ENCODE measurements at regions of chr20 and their contacts with region 1.

Region 1: DNA sequence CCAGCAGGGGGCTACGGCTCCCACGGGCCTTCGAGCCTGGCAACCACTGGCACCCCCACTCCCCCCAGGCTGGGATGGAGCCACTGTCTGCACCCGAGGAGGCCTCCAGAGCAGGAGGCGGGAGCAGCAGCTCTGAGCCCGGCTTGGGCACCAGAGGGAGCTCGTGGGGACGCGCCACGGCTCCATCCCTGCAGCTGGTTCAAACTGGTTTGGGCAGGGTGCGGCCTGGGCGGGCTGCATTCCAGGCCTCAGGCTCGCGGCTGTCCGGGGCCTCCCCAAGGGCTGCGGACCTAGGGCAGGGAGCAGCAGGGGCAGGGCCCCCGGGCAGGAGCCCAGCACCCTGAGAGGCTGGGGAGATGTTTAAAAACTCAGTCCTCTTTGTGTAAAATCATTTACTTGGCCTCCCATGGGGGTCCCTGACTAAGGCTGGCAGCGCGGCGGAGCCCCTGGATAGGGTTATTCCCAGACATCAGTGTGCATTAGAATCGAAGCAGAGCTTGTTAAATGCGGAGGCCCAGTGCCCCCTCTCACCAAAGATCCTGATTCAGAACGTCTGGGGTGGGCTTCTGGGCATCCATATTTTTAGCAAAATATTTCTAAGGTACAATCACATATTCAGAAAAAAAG is 4.1 kb upstream of the BCAS4 start:
- DNase-seq: peak; percentile 90
- H3K4me3 Mint-ChIP-seq: no peak overlapping the region
- H3K27ac Mint-ChIP-seq: peak overlapping the region; percentile 45
- H3K4me1 Mint-ChIP-seq: peaks cover 12% of the 10 kb centered on the region
- H3K27me3 Mint-ChIP-seq: no peaks in the 10 kb centered on the region

Region 2: GRCh38 chr20:50645253-50646118 is 145.3 kb before region 1 on chr20:
- CTCF ChIA-PET with region 1: no interaction called
- POLR2A ChIA-PET with region 1: no interaction called
- intact Hi-C with region 1: no loop called
- DNase-seq: no peak
- H3K4me3 Mint-ChIP-seq: no peak overlapping the region
- H3K27ac Mint-ChIP-seq: no peak overlapping the region
- H3K4me1 Mint-ChIP-seq: no peaks in the 10 kb centered on the region
- H3K27me3 Mint-ChIP-seq: no peaks in the 10 kb centered on the region

Region 3: GRCh38 chr20:50717974-50718761 is 72.6 kb before region 1 on chr20:
- CTCF ChIA-PET with region 1: no interaction called
- POLR2A ChIA-PET with region 1: no interaction called
- intact Hi-C with region 1: no loop called
- DNase-seq: no peak
- H3K4me3 Mint-ChIP-seq: no peak overlapping the region
- H3K27ac Mint-ChIP-seq: no peak overlapping the region
- H3K4me1 Mint-ChIP-seq: no peaks in the 10 kb centered on the region
- H3K27me3 Mint-ChIP-seq: peaks cover 3% of the 10 kb centered on the region

Region 4: DNA sequence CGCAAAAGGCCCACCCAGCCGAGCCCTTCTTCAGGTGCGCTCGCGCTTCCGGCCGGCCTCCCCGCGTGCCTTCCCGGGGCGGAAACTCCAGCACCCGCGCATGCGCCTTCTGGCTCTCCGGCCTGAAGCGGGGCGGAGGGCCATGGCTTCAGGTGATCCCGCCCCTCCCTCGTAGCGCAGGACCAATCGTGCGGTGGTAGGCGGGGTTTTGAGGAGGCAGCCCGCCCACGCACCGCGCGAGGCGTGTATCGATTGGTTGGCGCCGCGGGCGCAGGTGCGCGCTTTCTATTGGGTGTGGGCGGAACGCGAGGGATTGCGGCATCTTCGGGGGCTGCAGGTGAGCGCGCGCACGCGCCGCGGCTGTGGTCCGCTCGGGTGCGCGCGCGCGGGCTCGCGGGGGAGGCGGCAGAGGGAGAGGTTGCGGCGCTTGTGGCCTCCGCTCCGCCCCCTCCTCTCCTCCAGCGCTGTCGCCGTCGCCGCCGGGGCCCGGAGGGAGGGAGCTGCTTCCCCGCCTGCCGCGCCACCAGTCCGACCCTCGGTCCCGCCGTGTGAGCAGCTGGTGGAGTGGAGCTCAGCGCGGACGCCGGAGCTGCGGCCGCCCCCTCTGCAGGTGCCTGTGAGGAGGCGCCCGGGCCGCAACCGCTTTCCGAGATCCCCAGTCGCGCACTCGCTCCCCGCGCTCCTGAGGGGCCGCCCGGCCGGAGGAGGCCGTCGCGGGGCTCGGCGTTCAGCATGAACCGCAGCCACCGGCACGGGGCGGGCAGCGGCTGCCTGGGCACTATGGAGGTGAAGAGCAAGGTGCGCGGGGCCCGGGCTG is 59.5 kb before region 1 on chr20 and contains the start of gene PARD6B:
- CTCF ChIA-PET with region 1: interaction called, 5 read pairs
- POLR2A ChIA-PET with region 1: no interaction called
- intact Hi-C with region 1: loop called (anchors 2 kb)
- DNase-seq: peak; percentile 100
- H3K4me3 Mint-ChIP-seq: peak within 1 kb of the TSS; percentile 87
- H3K27ac Mint-ChIP-seq: peak within 1 kb of the TSS; percentile 65
- H3K4me1 Mint-ChIP-seq: peaks cover 59% of the 10 kb centered on the region
- H3K27me3 Mint-ChIP-seq: no peaks in the 10 kb centered on the region
- total RNA-seq, gene PARD6B: 6.3 to 8.2 TPM

Region 5: GRCh38 chr20:50776122-50776817 is 14.5 kb before region 1 on chr20:
- CTCF ChIA-PET with region 1: interaction called, 18 read pairs
- POLR2A ChIA-PET with region 1: no interaction called
- intact Hi-C with region 1: no loop called
- DNase-seq: no peak
- H3K4me3 Mint-ChIP-seq: no peak overlapping the region
- H3K27ac Mint-ChIP-seq: no peak overlapping the region
- H3K4me1 Mint-ChIP-seq: no peaks in the 10 kb centered on the region
- H3K27me3 Mint-ChIP-seq: peaks cover 4% of the 10 kb centered on the region

Region 6: GRCh38 chr20:50815162-50815989 is 24.6 kb after region 1 on chr20:
- CTCF ChIA-PET with region 1: interaction called, 21 read pairs
- POLR2A ChIA-PET with region 1: interaction called, 4 read pairs
- intact Hi-C with region 1: loop called (anchors 1 kb)
- DNase-seq: no peak
- H3K4me3 Mint-ChIP-seq: peak overlapping the region; percentile 7
- H3K27ac Mint-ChIP-seq: peak overlapping the region; percentile 2
- H3K4me1 Mint-ChIP-seq: peaks cover 15% of the 10 kb centered on the region
- H3K27me3 Mint-ChIP-seq: no peaks in the 10 kb centered on the region

Region 7: GRCh38 chr20:50929299-50930138 is 138.8 kb after region 1 on chr20:
- CTCF ChIA-PET with region 1: interaction called, 268 read pairs
- POLR2A ChIA-PET with region 1: interaction called, 23 read pairs
- intact Hi-C with region 1: loop called (anchors 1 kb)
- DNase-seq: peak; percentile 97
- H3K4me3 Mint-ChIP-seq: peak overlapping the region; percentile 98
- H3K27ac Mint-ChIP-seq: peak overlapping the region; percentile 97
- H3K4me1 Mint-ChIP-seq: peaks cover 48% of the 10 kb centered on the region
- H3K27me3 Mint-ChIP-seq: no peaks in the 10 kb centered on the region

Region 8: DNA sequence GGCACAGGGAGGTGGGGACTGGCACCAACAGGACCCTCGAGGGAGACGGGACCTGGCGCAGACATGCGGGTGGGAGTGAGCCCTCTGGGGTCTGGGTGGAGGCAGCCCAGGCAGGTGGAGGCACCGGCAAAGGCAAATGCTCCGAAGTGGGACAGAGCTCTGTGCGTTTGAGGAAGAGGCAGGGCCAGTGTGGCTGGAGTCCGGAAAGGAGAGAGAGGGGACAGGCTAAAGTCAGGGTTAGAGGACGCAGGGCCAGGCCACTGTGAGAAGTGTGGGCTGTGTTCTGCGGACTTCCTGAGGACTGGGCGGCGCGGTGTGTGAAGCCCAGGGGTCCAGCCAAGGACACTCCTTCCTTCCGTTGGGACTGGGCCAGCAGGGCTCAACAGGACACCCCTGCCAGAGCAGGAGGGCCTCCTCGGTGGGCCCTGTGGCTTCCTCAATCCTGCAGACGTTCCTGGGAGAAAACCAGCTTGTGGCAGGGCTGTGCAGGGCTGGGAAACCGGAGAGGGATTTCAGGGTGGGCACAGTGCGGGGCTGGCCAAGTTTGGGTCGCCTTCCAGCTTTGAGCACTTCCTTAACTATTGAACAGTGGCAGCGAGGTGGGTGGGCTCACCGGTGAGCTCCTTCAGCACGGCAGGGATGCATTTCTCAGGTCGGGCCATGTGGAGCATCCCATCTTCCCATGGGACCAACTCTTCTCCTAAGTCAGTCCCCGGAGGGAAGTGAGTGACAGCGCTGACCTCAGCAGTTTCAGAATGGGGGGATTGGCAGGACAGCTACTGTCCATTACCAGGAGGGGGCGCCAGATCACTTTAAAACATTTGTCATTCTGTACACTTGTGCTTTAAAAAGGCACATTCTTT is 190.3 kb after region 1 on chr20:
- CTCF ChIA-PET with region 1: interaction called, 28 read pairs
- POLR2A ChIA-PET with region 1: interaction called, 16 read pairs
- intact Hi-C with region 1: loop called (anchors 2 kb)
- DNase-seq: peak; percentile 72
- H3K4me3 Mint-ChIP-seq: no peak overlapping the region
- H3K27ac Mint-ChIP-seq: peak overlapping the region; percentile 28
- H3K4me1 Mint-ChIP-seq: peaks cover 18% of the 10 kb centered on the region
- H3K27me3 Mint-ChIP-seq: peaks cover 42% of the 10 kb centered on the region

Region 9: DNA sequence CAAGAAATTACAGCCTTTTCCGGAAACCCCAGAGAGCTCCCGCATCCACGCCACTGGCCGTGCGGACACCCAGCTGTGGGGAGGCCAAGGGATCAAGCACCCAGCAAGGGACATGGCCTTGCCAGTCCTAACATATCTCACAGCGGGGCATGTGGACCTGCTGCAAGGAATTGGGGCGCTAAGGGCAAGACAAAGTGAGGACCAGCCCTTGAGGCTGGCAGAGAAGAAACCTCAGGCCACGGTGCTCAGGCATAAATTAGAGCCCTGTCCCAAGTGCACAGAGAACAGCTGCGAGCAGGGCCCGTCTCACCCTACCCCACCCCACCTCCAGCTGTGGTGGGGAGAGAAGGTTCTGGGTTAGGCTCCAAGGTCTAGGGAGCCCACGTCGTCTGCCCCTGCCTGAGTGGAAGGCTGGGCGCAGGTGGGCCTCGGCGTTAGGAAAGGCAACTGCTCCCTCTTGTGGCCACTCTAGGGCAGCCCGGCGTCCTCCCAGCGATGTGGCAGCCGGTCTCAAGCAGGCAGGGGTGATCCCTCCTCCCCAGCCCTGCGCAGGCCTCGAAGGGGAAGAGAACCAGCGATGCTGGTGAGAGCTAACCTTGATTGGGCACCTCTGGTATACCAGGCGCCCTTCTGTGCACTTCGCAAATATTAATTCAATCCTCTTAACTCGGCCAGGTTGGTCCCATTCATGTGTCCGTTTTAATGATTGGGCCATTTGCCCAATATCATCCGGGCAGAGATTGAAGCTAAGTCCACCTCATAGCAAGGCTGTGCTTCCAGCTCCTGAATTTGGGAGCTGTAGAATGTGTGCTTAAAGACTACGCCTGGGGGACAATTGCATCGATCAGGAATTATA is 516.0 kb after region 1 on chr20:
- CTCF ChIA-PET with region 1: interaction called, 12 read pairs
- POLR2A ChIA-PET with region 1: no interaction called
- intact Hi-C with region 1: loop called (anchors 1 kb)
- DNase-seq: peak; percentile 81
- H3K4me3 Mint-ChIP-seq: no peak overlapping the region
- H3K27ac Mint-ChIP-seq: no peak overlapping the region
- H3K4me1 Mint-ChIP-seq: no peaks in the 10 kb centered on the region
- H3K27me3 Mint-ChIP-seq: peaks cover 6% of the 10 kb centered on the region

Measured in activated CD4-positive, alpha-beta memory T cell treated with anti-CD3 and anti-CD28 coated beads for 36 hours (primary cell).